Activated B cell treated with CpG ODN at 0.5 μM for 24 hours (primary cell): ENCODE measurements at regions of chr3 and their contacts with region 1.

Region 1: DNA sequence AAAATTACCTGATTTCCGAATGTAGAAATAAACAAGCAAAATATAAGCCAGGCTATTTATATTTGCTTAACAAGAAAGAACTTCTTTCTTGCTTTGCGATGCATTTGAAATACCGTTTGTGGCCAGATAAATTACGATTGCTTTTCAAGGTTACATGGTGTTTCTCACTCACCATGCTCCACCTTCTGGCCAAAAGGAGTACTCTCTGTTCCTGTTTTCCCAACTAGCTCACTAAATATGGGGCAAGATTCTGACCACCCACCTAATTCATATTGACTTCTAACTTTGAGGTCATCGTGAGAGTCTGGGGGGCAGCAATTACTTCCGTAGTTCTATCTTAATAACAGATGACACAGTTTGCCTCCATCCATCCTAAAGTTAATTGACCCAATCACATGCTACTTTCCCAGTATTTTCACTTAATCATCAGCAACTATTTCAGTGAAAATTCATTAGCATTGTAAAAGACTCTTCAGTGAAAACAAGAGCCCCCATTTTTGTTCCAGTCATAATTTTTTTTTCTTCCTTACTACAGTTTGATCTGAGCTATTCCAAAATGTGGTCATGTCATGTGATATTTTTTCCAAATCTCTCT is 25.9 kb downstream of the ACP3 start:
- DNase-seq: no peak
- ATAC-seq: peak; percentile 62
- H3K4me3 Mint-ChIP-seq: no peak overlapping the region
- H3K27ac Mint-ChIP-seq: no peak overlapping the region
- H3K4me1 Mint-ChIP-seq: peaks cover 3% of the 10 kb centered on the region
- H3K27me3 Mint-ChIP-seq: no peaks in the 10 kb centered on the region
- CTCF ChIP-seq: no peak

Region 2: GRCh38 chr3:130671545-130672312 is 1671.4 kb before region 1 on chr3:
- CTCF ChIA-PET with region 1: no interaction called
- POLR2A ChIA-PET with region 1: no interaction called
- intact Hi-C with region 1: no loop called
- DNase-seq: no peak
- ATAC-seq: no peak
- H3K4me3 Mint-ChIP-seq: no peak overlapping the region
- H3K27ac Mint-ChIP-seq: no peak overlapping the region
- H3K4me1 Mint-ChIP-seq: no peaks in the 10 kb centered on the region
- H3K27me3 Mint-ChIP-seq: no peaks in the 10 kb centered on the region
- CTCF ChIP-seq: no peak

Region 3: DNA sequence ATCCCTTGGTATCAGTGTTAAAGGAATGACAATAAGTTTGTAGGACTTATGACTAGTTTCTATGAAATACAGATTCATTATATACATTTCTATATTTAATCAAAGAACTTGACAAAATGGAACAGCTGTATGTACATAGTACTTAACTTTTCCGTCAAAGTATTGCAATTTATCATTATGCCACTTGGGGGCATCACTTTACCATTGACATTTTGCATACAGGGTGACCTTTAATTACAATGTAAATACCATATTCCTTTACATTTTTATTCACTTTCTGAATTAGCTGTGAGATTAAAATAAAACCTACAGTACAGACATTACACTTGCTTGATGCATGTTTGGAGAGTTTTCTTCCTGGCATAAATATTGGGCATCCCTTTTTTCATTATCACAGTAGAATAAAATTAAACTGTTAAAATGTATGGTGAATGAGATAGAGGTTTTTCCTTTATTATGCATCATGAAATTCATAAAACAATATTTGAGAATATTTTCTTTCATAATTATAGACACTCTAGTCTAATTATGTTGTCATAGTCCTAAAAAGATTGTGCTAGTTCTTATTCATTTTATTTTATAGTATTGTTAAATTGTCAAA is 1309.5 kb before region 1 on chr3:
- CTCF ChIA-PET with region 1: interaction called, 5 read pairs
- POLR2A ChIA-PET with region 1: no interaction called
- intact Hi-C with region 1: loop called (anchors 1 kb)
- DNase-seq: no peak
- ATAC-seq: peak; percentile 60
- H3K4me3 Mint-ChIP-seq: no peak overlapping the region
- H3K27ac Mint-ChIP-seq: no peak overlapping the region
- H3K4me1 Mint-ChIP-seq: no peaks in the 10 kb centered on the region
- H3K27me3 Mint-ChIP-seq: no peaks in the 10 kb centered on the region
- CTCF ChIP-seq: peak; percentile 71

Region 4: GRCh38 chr3:131794766-131795388 is 548.2 kb before region 1 on chr3:
- CTCF ChIA-PET with region 1: interaction called, 4 read pairs
- POLR2A ChIA-PET with region 1: no interaction called
- intact Hi-C with region 1: loop called (anchors 2 kb)
- DNase-seq: no peak
- ATAC-seq: peak; percentile 66
- H3K4me3 Mint-ChIP-seq: no peak overlapping the region
- H3K27ac Mint-ChIP-seq: no peak overlapping the region
- H3K4me1 Mint-ChIP-seq: peaks cover 15% of the 10 kb centered on the region
- H3K27me3 Mint-ChIP-seq: peaks cover 14% of the 10 kb centered on the region
- CTCF ChIP-seq: no peak

Region 5: DNA sequence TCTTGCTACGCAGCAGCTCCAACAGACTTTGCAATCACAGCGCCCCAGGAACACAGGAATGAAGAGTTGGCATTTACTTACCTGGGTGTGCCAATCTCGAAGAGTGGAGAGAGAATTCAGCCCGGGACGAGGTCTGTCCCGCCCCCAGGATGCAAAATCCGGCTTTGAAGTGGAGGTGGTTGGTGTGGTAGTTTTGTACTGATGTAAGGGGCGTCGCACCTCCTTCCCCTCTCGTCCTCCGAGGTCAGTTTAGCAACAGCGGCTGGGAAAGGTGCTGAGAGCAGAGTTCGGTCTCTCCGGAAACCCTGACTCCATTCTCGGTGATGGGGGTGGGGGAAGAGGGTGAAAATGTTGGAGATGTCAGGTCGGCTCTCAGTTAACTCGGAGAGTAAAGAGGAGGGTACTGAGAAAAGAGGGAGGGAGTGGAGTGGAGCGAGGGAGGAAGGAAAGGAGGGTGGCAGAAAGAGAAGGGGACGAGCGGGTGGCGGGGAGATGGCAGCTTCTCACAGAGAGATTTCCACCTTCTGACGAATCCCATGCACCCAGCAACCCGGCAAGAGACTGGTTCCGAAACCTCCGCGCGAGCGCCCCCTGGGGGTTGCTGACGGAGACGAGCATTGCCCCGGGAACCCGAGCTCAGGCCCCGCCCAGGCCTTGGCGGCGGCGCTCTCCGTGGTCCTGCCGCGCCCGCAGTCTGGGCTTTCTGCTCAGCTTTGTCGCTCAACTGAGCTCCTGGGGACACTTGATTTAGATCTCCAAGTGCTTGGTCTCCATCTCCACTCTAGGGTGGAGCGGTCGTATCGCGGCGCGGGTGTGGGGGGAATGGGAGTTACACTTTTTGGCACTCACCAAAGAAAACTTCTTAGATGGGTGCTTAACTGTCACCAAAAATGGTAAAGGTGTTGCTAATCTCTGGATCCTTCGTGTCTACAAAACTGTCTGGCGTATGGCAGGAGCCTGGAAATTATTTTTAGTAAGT is 308.3 kb before region 1 on chr3 and contains the start of gene CPNE4:
- CTCF ChIA-PET with region 1: interaction called, 3 read pairs
- POLR2A ChIA-PET with region 1: no interaction called
- intact Hi-C with region 1: loop called (anchors 1 kb)
- DNase-seq: no peak
- ATAC-seq: no peak
- H3K4me3 Mint-ChIP-seq: no peak within 1 kb of the TSS
- H3K27ac Mint-ChIP-seq: no peak within 1 kb of the TSS
- H3K4me1 Mint-ChIP-seq: peaks cover 9% of the 10 kb centered on the region
- H3K27me3 Mint-ChIP-seq: peaks cover 65% of the 10 kb centered on the region
- CTCF ChIP-seq: no peak
- total RNA-seq, gene CPNE4: not detected in 2 replicates

Region 6: DNA sequence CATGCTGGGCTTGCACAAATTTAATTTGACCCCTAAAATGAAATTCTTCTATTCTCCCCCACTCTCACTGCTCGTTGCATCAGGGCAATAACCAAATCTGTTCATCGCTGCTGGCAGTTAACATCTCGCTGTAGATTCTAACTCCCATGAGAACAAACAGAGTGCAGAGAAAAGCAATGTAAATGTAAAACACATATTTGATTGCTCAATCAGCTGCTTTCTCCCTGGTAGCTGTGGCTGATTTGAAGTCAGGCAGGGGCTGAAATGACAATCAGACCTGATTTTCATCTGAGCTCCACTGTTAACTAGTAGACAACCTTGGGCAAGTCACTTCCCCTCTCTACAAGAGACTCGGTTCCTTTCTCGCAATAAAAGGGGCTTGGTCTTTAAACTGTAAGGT is 188.5 kb before region 1 on chr3:
- CTCF ChIA-PET with region 1: no interaction called
- POLR2A ChIA-PET with region 1: no interaction called
- intact Hi-C with region 1: no loop called
- DNase-seq: no peak
- ATAC-seq: no peak
- H3K4me3 Mint-ChIP-seq: no peak overlapping the region
- H3K27ac Mint-ChIP-seq: no peak overlapping the region
- H3K4me1 Mint-ChIP-seq: no peaks in the 10 kb centered on the region
- H3K27me3 Mint-ChIP-seq: no peaks in the 10 kb centered on the region
- CTCF ChIP-seq: no peak

Region 7: DNA sequence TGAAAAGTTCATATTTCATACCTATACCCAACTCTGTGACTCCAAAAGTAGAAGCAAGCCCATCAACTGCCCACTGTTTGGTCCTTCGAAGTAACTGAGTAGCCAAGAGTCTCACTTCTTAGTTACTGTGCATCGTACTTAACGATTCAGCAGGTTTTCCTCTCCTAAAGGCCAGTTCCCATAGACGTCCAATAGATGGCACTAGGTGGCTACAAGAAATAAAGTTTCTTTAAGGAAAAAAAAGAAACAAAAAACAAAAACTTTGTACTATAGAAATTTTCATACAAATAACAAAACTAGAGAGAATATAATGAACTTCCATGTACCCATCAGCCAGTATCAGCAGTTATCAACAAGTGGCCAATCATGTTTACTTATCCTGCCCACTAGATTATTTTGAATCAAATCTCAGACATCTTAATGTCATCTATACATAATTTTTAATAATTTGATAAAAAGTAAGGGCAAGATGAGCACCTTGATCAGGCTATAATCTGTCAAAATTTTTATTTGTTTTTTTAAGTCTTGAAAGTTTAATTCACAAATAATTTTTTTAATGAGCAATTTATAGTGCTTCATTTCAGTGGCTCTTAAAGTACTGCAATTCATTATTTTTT is 89.7 kb before region 1 on chr3:
- CTCF ChIA-PET with region 1: interaction called, 6 read pairs
- POLR2A ChIA-PET with region 1: no interaction called
- intact Hi-C with region 1: loop called (anchors 1 kb)
- DNase-seq: no peak
- ATAC-seq: no peak
- H3K4me3 Mint-ChIP-seq: no peak overlapping the region
- H3K27ac Mint-ChIP-seq: no peak overlapping the region
- H3K4me1 Mint-ChIP-seq: no peaks in the 10 kb centered on the region
- H3K27me3 Mint-ChIP-seq: no peaks in the 10 kb centered on the region
- CTCF ChIP-seq: no peak

Region 8: DNA sequence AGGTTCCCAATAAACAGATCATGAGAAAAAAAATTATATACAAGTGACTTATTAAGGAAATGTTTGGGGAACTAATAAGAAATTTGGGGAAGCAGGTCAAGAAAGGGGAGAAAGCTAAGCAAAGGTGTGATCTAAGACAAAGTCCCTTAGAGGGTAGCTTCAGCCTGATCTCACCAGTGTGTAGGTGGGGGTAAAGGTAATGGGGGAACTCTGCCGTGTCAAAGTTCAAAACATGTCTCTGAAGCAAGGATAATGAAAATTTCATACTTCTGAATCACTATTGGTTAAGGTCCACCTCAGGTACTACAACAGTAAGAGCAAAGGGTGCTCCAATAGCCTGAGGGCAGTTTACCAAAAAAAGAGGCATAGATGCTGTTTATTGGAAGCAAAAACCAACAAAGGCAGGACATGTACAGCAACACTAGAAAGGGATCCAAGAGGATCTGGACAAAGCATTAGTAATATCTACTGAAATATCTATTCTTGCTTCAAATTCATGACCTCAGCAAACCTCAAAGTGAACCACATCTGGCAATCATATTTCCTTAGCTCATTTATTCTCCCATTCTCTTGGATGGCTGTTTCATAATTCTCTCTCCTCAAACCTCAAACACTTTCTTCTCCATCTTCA is 309.6 kb after region 1 on chr3:
- CTCF ChIA-PET with region 1: no interaction called
- POLR2A ChIA-PET with region 1: no interaction called
- intact Hi-C with region 1: no loop called
- DNase-seq: no peak
- ATAC-seq: no peak
- H3K4me3 Mint-ChIP-seq: no peak overlapping the region
- H3K27ac Mint-ChIP-seq: no peak overlapping the region
- H3K4me1 Mint-ChIP-seq: peaks cover 5% of the 10 kb centered on the region
- H3K27me3 Mint-ChIP-seq: no peaks in the 10 kb centered on the region
- CTCF ChIP-seq: no peak

Region 9: DNA sequence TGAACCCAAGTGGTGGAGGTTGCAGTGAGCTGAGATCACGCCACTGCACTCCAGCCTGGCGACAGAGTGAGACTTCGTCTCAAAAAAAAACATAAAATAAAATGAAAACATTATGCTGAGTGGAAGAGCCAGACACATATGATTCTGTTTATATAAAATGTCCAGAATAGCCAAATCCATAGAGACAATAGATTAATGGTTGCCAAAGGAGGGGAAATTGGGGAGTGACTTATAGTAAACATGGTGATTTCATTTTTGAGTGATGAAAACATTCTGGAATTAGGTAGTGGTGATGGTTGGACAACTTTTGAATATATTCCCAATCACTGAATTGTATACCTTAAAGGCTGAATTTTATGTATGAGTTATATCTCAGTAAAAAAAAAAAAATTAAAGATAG is 884.7 kb after region 1 on chr3:
- CTCF ChIA-PET with region 1: no interaction called
- POLR2A ChIA-PET with region 1: no interaction called
- intact Hi-C with region 1: no loop called
- DNase-seq: no peak
- ATAC-seq: no peak
- H3K4me3 Mint-ChIP-seq: no peak overlapping the region
- H3K27ac Mint-ChIP-seq: no peak overlapping the region
- H3K4me1 Mint-ChIP-seq: no peaks in the 10 kb centered on the region
- H3K27me3 Mint-ChIP-seq: peaks cover 5% of the 10 kb centered on the region
- CTCF ChIP-seq: no peak